ENCODE measurements at regions of chr21 and their contacts with region 1.

Region 1: DNA sequence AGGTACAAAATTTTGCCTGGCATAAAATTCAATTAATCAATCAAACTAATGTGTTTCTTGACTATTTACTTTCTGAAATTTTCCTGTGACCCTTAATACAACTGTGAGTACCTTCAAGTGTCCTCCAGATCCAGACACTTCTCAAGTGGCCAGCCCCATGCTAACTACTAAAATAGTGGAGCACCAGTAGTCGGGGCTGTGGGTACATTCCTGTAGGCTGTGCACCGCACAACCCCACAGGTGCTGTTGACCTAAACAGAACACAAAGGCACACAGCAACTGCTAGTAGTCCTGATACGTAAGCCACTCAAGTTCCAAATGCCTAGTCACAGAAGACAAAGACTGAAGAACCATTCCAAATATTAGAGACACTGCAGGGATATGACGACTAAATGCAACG is 36.6 kb downstream of the TMEM50B start:
- DNase-seq: no peak
- H3K4me3 ChIP-seq: no peak overlapping the region
- H3K27ac ChIP-seq: no peak overlapping the region
- H3K4me1 ChIP-seq: no peaks in the 10 kb centered on the region
- H3K27me3 ChIP-seq: no peaks in the 10 kb centered on the region
- CTCF ChIP-seq: no peak
- EP300 ChIP-seq: no peak
- POLR2A ChIP-seq: no peak
- RAD21 ChIP-seq: no peak

Region 2: GRCh38 chr21:33199516-33200217 is 243.5 kb before region 1 on chr21:
- CTCF ChIA-PET with region 1: interaction called, 39 read pairs
- POLR2A ChIA-PET with region 1: interaction called, 5 read pairs
- DNase-seq: peak in 1 of 2 experiments; percentile 71
- H3K4me3 ChIP-seq: no peak overlapping the region
- H3K27ac ChIP-seq: no peak overlapping the region
- H3K4me1 ChIP-seq: peaks cover 0 to 8% (median 2%) of the 10 kb centered on the region in 4 experiments; a peak in 4 of 7 replicates
- H3K27me3 ChIP-seq: no peaks in the 10 kb centered on the region; a peak in 1 of 7 replicates
- CTCF ChIP-seq: peak in 2 of 3 experiments; percentile 73 to 82; a peak in 3 of 4 replicates
- EP300 ChIP-seq: no peak
- POLR2A ChIP-seq: no peak
- RAD21 ChIP-seq: peak; percentile 95 to 96

Region 3: DNA sequence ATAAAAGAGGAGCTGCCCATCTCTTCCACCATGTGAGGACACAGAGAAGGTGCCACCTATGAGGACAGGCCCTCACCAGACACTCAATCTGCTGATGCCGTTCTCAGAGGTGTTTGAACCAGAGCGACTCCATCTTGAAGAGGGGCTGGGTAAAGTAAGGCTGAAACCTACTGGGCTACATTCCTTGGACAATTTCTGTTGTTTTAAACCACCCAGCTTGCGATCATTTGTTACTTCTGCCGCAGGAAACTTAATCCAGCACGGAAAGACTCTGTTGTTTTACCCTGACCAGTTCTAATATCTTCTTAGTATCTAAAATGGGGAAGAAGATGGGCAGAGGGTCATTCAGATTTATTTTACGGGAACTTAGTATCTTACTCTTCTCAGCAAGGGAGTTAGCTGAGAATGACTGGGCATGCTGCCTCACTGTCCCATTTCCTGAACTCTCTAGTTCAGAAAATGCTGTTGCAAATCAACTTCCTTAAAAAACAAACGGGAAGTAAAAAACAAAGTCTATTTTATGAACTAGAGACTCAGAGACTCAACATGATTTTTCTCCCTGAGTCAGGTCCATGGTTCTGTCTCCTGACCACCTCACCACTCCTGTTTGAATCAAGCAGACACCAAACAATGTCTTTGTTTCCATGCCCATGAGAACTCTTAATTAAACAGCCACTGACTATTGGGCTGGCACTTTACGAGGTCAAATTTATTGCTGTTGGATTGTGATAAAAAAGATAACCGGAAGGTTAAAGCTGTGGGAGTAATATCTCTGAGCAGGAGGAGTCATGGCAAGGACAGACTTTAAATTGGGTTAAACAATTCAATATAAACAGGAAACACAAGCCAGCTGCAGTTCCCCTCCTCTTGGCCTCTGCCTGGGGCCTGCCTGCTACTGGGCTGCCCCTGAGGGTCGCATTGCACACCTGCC is 142.2 kb before region 1 on chr21:
- CTCF ChIA-PET with region 1: interaction called, 12 read pairs
- POLR2A ChIA-PET with region 1: no interaction called
- DNase-seq: peak in 1 of 2 experiments; percentile 27
- H3K4me3 ChIP-seq: no peak overlapping the region
- H3K27ac ChIP-seq: no peak overlapping the region
- H3K4me1 ChIP-seq: no peaks in the 10 kb centered on the region
- H3K27me3 ChIP-seq: no peaks in the 10 kb centered on the region
- CTCF ChIP-seq: no peak
- EP300 ChIP-seq: no peak
- POLR2A ChIP-seq: no peak
- RAD21 ChIP-seq: no peak

Region 4: DNA sequence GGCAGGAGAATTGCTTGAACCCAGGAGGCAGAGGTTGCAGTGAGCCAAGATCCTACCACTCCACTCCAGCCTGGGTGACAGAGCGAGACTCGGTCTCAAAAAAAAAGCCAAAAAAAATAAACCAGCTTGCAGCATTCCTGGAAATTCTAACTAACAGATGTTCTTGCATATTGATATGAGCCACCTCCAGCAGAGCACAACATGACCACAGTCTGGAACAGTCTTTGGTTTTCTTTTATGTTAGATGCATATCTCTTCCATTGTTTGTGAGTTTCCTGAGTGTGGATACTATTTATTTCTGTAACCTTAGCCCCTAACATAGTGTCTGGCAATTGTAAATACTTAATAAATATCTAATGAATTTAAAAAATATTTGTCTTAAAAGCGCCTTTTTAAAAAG is 94.5 kb before region 1 on chr21:
- CTCF ChIA-PET with region 1: interaction called, 22 read pairs
- POLR2A ChIA-PET with region 1: no interaction called
- DNase-seq: no peak
- H3K4me3 ChIP-seq: no peak overlapping the region
- H3K27ac ChIP-seq: no peak overlapping the region
- H3K4me1 ChIP-seq: no peaks in the 10 kb centered on the region
- H3K27me3 ChIP-seq: no peaks in the 10 kb centered on the region
- CTCF ChIP-seq: no peak
- EP300 ChIP-seq: no peak
- POLR2A ChIP-seq: no peak
- RAD21 ChIP-seq: no peak

Region 5: DNA sequence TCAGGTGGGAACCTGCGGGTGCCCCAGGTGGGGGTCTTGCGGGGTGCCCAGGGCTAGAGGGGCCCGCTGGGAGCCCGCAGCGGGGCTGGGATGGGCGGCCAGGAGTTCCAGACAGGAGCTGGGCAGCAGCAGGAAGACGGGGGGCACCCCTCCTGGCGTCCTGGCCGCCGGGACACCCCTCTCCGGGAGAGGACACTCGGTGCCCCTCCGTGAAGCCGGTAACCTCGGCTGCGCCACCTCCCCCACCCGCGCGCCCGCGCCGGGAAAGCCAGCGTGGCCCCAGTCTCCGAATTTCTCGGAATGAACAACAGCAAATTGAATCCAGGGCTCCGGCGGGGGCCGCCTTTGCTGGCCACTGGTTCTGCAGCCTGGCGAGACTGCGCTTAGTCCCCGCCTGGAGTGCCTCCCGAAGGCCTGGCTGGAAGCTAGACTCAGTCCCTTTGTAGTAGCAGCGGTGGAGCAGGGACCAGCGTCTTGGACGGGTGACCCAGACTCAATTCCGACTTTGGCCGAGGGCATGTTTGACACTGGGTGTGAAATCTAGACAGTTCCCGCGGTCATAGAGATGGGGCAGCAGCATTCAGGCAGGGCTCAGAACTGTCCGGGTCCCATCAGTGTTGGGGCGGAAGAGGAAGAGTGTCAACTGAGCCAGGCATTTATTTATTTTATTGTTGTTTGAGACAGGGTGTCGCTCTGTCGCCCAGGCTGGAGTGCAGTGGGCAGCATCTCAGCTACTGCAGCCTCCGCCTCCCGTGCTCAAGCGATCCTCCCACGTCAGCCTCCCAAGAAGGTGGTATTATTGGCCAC is 39.2 kb before region 1 on chr21:
- CTCF ChIA-PET with region 1: interaction called, 12 read pairs
- POLR2A ChIA-PET with region 1: no interaction called
- DNase-seq: peak in 1 of 2 experiments; percentile 77
- H3K4me3 ChIP-seq: peak overlapping the region; percentile 58 to 95 (median 76)
- H3K27ac ChIP-seq: no peak overlapping the region; the same call in 1 of the 2 replicates
- H3K4me1 ChIP-seq: peaks cover 2 to 6% (median 3%) of the 10 kb centered on the region in 4 experiments
- H3K27me3 ChIP-seq: no peaks in the 10 kb centered on the region
- CTCF ChIP-seq: no peak
- EP300 ChIP-seq: no peak
- POLR2A ChIP-seq: peak in 1 of 2 experiments; percentile 41; a peak in 1 of 3 replicates
- RAD21 ChIP-seq: no peak

Measured in H1 (cell line).